Lower lobe of right lung (tissue), 2 donors: ENCODE measurements at regions of chr11 and their contacts with region 1.

Region 1: GRCh38 chr11:124673333-124674167 is at the starts of genes SIAE and SPA17:
- DNase-seq: peak; percentile 95
- ATAC-seq: peak; percentile 98 to 99
- H3K4me3 ChIP-seq: peak within 1 kb of the TSS; percentile 80
- H3K27ac ChIP-seq: peak within 1 kb of the TSS; percentile 92
- H3K4me1 ChIP-seq: peaks cover 38% of the 10 kb centered on the region
- H3K27me3 ChIP-seq: no peaks in the 10 kb centered on the region
- CTCF ChIP-seq: no peak
- total RNA-seq, gene SIAE: 41.4 TPM
- total RNA-seq, gene SPA17: 8.5 TPM

Region 2: DNA sequence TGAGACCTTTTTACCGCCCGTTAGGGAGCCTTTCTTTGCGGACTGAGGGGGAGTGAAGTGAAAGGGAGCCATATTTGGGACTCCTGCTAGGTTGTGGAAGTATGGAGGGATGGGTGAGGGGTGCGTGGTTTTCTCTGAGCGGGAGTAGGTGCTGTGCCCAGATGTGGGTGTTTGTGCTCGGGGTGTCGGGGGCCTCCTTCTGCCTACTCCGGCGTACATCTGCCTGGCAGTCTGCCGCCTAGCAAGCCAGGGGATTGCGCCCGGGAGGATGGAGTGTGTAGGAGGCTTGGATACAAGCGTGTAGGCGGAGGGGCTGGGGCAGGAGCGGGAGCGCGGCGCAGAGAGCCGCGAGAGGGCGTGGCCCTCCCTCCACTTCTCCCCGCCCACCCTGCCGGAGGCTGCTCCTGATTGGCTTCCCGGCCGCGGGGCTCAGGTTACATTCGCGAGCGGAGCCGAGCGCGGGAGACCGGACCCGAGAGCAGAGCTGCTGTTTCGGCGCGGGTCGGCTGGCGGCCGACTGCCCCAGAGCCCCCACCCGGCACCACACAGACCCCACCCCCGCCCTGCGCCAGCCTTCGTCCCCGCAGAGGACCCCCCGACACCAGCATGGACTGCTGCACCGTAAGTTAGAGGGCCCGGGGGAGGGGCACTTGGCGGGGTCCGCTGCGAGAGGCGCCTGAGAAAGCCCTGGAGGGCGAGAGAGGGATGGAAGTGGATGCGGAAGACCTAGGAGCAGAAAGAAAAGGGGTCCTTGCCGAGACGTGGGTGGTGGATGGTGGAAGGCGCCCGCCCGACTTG is 66.1 kb after region 1 on chr11 and contains the start of gene NRGN:
- intact Hi-C with region 1: loop called (anchors 10 kb)
- DNase-seq: peak; percentile 94
- ATAC-seq: peak; percentile 97 to 99
- H3K4me3 ChIP-seq: peak within 1 kb of the TSS; percentile 66
- H3K27ac ChIP-seq: peak within 1 kb of the TSS; percentile 56
- H3K4me1 ChIP-seq: peaks cover 18% of the 10 kb centered on the region
- H3K27me3 ChIP-seq: no peaks in the 10 kb centered on the region
- CTCF ChIP-seq: no peak
- total RNA-seq, gene NRGN: 99.1 TPM

Region 3: GRCh38 chr11:124763156-124763947 is 89.8 kb after region 1 on chr11:
- intact Hi-C with region 1: loop called (anchors 10 kb)
- DNase-seq: peak; percentile 93
- ATAC-seq: peak; percentile 56 to 59
- H3K4me3 ChIP-seq: peak overlapping the region; percentile 66
- H3K27ac ChIP-seq: peak overlapping the region; percentile 92
- H3K4me1 ChIP-seq: peaks cover 47% of the 10 kb centered on the region
- H3K27me3 ChIP-seq: peaks cover 41% of the 10 kb centered on the region
- CTCF ChIP-seq: peak; percentile 82

Region 4: GRCh38 chr11:124800226-124800929 is 126.8 kb after region 1 on chr11 and contains the start of gene MSANTD2:
- intact Hi-C with region 1: no loop called
- DNase-seq: peak; percentile 89
- ATAC-seq: peak; percentile 97 to 99
- H3K4me3 ChIP-seq: peak within 1 kb of the TSS; percentile 84
- H3K27ac ChIP-seq: peak within 1 kb of the TSS; percentile 100
- H3K4me1 ChIP-seq: peaks cover 36% of the 10 kb centered on the region
- H3K27me3 ChIP-seq: no peaks in the 10 kb centered on the region
- CTCF ChIP-seq: no peak
- total RNA-seq, gene MSANTD2: 15.4 TPM